GM12878 (cell line): ENCODE measurements at regions of chr1 and their contacts with region 1.

Region 1: DNA sequence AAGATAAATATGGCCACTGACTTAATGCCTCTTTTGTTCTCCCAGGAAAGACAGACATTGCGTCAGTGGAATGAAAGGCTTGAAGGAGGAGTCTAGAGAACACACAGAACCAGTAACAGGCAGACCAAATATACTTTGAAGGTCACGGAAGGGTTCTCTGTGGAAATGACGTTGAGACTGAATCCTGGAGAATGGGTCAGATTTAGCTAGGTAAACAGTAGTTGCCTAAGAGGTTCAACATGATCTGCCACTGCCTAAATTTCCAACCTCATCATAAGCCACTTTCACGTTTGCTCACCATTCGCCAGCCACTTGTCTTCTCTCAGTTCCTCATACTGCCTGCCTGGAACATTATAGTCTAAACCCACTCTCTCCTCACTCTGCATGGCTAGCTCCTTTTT is 20.5 kb downstream of the PLA2G4A start:
- DNase-seq: peak; percentile 67
- ATAC-seq: peak; percentile 97
- H3K4me3 ChIP-seq: peak overlapping the region; percentile 37; the same call in 1 of the 2 replicates
- H3K27ac ChIP-seq: no peak overlapping the region; the same call in 1 of the 2 replicates
- H3K4me1 ChIP-seq: peaks cover 5% of the 10 kb centered on the region; the same call in 1 of the 2 replicates
- H3K27me3 ChIP-seq: no peaks in the 10 kb centered on the region
- CTCF ChIP-seq: no peak
- EP300 ChIP-seq: peak in 1 of 2 experiments; percentile 58; a peak in 1 of 4 replicates
- POLR2A ChIP-seq: no peak
- RAD21 ChIP-seq: no peak

Region 2: DNA sequence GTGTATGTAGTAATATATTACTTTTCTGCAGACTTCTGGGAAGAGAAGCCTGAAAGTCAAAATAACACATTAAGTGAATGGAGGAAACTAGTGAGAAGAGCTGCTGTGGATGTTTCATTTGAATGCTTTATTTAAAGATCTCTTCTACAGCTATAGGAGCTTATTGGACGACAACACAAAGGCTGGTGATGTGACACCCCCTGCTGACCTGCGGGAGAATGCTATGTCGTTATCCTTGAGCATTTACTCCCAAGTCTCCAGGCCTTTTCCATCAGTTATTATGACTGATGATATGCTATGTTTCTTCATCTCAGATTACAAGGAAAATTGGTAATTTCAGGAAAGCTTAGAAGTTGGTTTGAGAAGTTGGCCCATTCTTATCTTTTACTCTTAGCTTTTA is 42.8 kb before region 1 on chr1:
- CTCF ChIA-PET with region 1: no interaction called
- POLR2A ChIA-PET with region 1: no interaction called
- RAD21 ChIA-PET with region 1: no interaction called
- SMC1A ChIA-PET with region 1: no interaction called
- in situ Hi-C with region 1: no loop called
- intact Hi-C with region 1: no loop called
- DNase-seq: no peak
- ATAC-seq: peak; percentile 46; the same call in 1 of the 3 replicates
- H3K4me3 ChIP-seq: no peak overlapping the region
- H3K27ac ChIP-seq: no peak overlapping the region
- H3K4me1 ChIP-seq: peaks cover 3% of the 10 kb centered on the region
- H3K27me3 ChIP-seq: no peaks in the 10 kb centered on the region
- CTCF ChIP-seq: peak; percentile 25 to 55 (median 49); a peak in 5 of 6 replicates
- EP300 ChIP-seq: no peak
- POLR2A ChIP-seq: no peak
- RAD21 ChIP-seq: peak; percentile 73

Region 3: GRCh38 chr1:186865253-186865652 is 16.0 kb after region 1 on chr1:
- CTCF ChIA-PET with region 1: interaction called, 3 read pairs
- POLR2A ChIA-PET with region 1: interaction called, 3 read pairs
- RAD21 ChIA-PET with region 1: no interaction called
- SMC1A ChIA-PET with region 1: interaction called, 3 read pairs
- in situ Hi-C with region 1: no loop called
- intact Hi-C with region 1: loop called (anchors 2 kb)
- DNase-seq: peak; percentile 25
- ATAC-seq: peak; percentile 84
- H3K4me3 ChIP-seq: no peak overlapping the region
- H3K27ac ChIP-seq: no peak overlapping the region
- H3K4me1 ChIP-seq: no peaks in the 10 kb centered on the region
- H3K27me3 ChIP-seq: no peaks in the 10 kb centered on the region
- CTCF ChIP-seq: no peak
- EP300 ChIP-seq: peak; percentile 48 to 52; a peak in 2 of 4 replicates
- POLR2A ChIP-seq: no peak
- RAD21 ChIP-seq: no peak